Psoas muscle (tissue), 8 donors: ENCODE measurements at regions of chr15 and their contacts with region 1.

Region 1: DNA sequence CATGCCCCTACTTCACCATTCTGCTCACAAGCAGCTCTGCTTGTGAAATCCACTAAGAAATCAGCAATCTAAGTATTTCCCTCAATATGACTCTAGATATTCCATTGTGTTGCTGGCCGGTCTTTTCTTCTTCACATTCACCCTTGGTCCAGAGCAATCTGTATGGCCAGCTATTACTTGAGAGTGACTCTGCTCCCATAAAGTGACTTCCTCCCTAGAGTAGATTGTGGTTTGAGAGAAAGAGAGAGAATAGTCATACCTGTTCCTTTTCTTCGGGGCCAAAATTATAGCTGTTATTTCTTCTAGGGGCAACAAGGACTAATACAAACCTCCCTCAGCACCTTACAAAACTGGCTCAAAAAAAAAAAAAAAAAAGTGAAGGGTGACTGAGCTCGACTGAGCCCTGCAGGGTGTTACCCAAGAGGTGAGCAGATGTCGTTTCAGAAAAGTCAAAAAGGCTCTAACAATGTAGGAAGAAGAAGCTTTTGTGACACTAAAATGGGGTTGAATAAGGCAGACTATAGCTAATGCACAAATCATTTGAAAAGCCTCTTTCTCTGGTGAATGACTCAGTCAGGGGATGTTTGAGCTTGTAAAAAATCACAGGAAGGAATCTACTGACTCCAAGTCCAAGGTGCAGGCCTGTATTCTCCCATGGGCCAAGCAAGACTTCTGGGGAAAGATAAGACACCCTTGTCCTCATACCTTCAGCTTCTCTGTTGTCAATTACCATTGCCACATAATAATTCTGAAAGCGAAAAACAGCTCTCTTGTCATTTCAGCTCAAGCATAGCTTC is 161.0 kb upstream of the SLC24A5 start:
- DNase-seq: no peak
- ATAC-seq: no peak
- H3K4me3 ChIP-seq: no peak overlapping the region
- H3K27ac ChIP-seq: no peak overlapping the region
- H3K4me1 ChIP-seq: no peaks in the 10 kb centered on the region
- H3K27me3 ChIP-seq: no peaks in the 10 kb centered on the region
- CTCF ChIP-seq: no peak

Region 2: DNA sequence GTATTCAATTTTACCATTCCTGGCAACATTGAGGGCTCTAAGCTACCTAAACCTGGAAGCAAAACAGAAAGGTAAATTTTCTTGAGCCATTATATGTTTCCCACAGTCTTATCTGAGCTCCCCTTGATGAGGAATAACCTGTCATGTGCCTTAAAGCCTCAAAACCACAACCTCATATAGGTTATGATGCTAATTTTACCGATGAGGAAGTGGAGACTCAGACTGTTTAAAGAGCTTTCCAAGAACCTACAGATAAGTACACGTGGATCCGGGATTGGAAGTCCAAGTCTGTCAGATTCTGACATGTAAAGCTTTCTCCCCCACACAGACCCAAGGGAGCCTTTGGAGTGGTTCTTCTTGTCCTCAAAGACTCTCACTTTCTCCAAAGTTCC is 102.0 kb before region 1 on chr15:
- intact Hi-C with region 1: loop called in 1 of 2 experiments (anchors 10 kb)
- DNase-seq: no peak
- ATAC-seq: no peak
- H3K4me3 ChIP-seq: no peak overlapping the region
- H3K27ac ChIP-seq: no peak overlapping the region
- H3K4me1 ChIP-seq: no peaks in the 10 kb centered on the region
- H3K27me3 ChIP-seq: no peaks in the 10 kb centered on the region
- CTCF ChIP-seq: no peak